Mammary epithelial cell (primary cell): ENCODE measurements at regions of chr1 and their contacts with region 1.

Region 1: DNA sequence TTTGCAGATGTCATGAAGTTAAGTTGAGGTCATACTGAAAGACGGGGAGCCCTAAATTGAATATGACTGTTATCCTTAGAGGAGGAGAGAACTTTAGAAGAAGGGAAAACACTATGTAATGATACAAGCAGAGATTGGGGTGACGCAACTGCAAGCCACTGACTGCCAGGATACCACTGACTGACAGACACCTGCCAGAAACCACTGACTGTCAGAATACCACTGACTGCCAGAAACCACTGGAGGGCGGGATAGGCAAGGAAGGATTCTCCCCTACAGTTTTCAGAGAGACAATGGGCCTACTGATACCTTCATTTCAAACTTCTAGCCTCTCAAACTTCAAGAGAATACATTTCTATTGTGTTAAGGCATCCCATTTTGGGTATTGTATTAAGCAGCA is 388.7 kb downstream of the USH2A start:
- DNase-seq: peak; percentile 11
- H3K4me3 ChIP-seq: no peak overlapping the region
- H3K27ac ChIP-seq: no peak overlapping the region
- H3K4me1 ChIP-seq: no peaks in the 10 kb centered on the region
- H3K27me3 ChIP-seq: no peaks in the 10 kb centered on the region
- CTCF ChIP-seq: peak; percentile 27 to 60

Region 2: DNA sequence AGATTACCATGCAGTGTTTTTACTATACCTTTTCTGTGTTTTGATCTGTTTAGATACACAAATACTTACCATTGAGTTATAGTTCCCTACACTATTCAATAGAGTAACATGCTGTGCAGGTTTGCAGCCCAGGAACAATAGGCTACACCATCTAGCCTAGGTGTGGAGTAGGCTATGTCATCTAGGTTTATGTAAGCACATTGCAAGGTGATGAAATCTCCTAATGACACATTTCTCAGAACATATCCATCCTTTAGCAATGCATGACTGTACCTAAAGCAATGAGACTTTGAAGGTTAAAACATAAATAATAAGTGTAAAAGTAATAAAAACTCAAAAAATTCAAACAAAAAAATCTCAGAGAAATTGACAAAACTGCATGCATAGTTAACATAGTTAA is 30.1 kb after region 1 on chr1:
- CTCF ChIA-PET with region 1: no interaction called
- dilution Hi-C with region 1: no loop called
- in situ Hi-C with region 1: no loop called
- intact Hi-C with region 1: no loop called
- DNase-seq: peak; percentile 33
- H3K4me3 ChIP-seq: no peak overlapping the region
- H3K27ac ChIP-seq: no peak overlapping the region
- H3K4me1 ChIP-seq: no peaks in the 10 kb centered on the region
- H3K27me3 ChIP-seq: peaks cover 2% of the 10 kb centered on the region
- CTCF ChIP-seq: no peak

Region 3: DNA sequence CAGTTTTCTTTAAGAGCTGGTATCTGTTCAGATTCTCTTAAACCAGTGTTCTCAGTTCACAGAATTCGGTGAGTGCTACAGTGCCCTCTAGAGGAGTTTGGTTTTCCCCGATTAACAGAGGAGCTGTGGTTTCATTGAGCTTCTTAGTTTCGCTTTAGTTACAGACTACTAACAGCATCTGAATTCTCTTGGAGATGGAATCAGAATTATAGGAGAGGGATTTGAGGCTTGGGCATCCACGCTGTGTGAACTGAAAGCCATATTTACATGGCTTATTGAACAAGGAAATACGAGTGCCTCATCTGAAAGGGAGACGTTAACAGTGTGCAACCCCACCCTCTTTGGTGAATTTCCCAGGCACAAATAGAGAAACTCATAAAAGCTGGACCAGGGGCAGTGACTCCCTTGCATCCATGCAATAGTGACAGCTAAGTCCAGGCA is 186.8 kb after region 1 on chr1:
- CTCF ChIA-PET with region 1: no interaction called
- dilution Hi-C with region 1: no loop called
- in situ Hi-C with region 1: no loop called
- intact Hi-C with region 1: loop called (anchors 1 kb)
- DNase-seq: peak; percentile 67
- H3K4me3 ChIP-seq: peak overlapping the region; percentile 44 to 56 (median 51)
- H3K27ac ChIP-seq: no peak overlapping the region
- H3K4me1 ChIP-seq: no peaks in the 10 kb centered on the region
- H3K27me3 ChIP-seq: no peaks in the 10 kb centered on the region
- CTCF ChIP-seq: peak; percentile 70 to 80